GM12878 (cell line): ENCODE measurements at regions of chr9 and their contacts with region 1.

Region 1: DNA sequence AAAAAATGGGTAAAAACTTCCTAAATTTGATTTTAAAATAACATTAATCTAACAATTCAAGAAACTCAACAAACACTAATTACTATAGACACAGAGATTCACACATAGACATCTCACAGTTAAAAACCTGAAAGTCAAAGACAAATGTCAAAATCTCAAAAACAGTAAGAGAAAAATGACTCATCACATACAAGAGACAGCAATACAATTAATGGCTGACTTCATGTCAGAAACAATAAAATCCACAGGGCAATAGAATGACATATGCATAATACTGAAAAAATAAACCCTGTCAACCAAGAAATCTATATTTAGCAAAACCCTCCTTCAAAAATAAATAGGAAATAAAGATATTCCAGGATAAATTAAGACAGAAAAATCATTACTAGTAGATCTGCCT is 200.4 kb downstream of the CEMIP2 start:
- DNase-seq: no peak
- ATAC-seq: no peak
- H3K4me3 ChIP-seq: no peak overlapping the region
- H3K27ac ChIP-seq: no peak overlapping the region
- H3K4me1 ChIP-seq: no peaks in the 10 kb centered on the region
- H3K27me3 ChIP-seq: no peaks in the 10 kb centered on the region
- CTCF ChIP-seq: no peak
- EP300 ChIP-seq: no peak
- POLR2A ChIP-seq: no peak
- RAD21 ChIP-seq: no peak

Region 2: GRCh38 chr9:71614409-71615010 is 46.6 kb after region 1 on chr9:
- CTCF ChIA-PET with region 1: no interaction called
- POLR2A ChIA-PET with region 1: no interaction called
- RAD21 ChIA-PET with region 1: no interaction called
- SMC1A ChIA-PET with region 1: no interaction called
- in situ Hi-C with region 1: loop called (anchors 5 kb)
- intact Hi-C with region 1: no loop called
- DNase-seq: no peak
- ATAC-seq: no peak
- H3K4me3 ChIP-seq: no peak overlapping the region
- H3K27ac ChIP-seq: no peak overlapping the region
- H3K4me1 ChIP-seq: no peaks in the 10 kb centered on the region
- H3K27me3 ChIP-seq: no peaks in the 10 kb centered on the region
- CTCF ChIP-seq: no peak
- EP300 ChIP-seq: no peak
- POLR2A ChIP-seq: no peak
- RAD21 ChIP-seq: no peak